Activated T-helper 2 cell treated with anti-CD3 and anti-CD28 coated beads, Interferon-gamma antibody, Interleukin-2, Interleukin-4, amounts not matched to agents 10 μg/mL and 5 μg/mL and 100 μg/mL, durations not matched to agents 14 hours and 24 hours and 36 hours (primary cell): ENCODE measurements at regions of chr13 and their contacts with region 1.

Region 1: DNA sequence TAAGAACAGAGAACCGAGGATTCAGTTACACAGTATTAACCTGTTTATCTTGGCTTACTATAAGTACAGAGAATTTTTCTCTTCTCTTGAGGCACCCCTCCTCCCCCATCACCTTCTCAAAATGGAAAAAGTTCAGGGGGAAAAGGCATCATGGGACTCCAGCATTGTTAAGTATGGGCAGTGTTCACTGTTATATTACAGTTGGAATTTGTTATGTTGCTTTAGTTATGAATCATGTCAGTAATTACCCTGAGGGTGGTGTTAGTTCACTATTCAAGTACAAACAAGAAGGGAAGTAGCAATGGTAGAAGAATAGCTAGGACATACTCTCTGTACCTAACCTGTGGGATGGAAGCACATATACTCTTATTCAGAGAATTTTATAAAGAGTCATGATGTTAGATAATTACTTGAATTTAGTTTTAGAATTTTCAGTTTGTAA is 12.0 kb downstream of the LPAR6 start:
- DNase-seq: no peak
- H3K4me3 Mint-ChIP-seq: peak overlapping the region; percentile 20
- H3K27ac Mint-ChIP-seq: peak overlapping the region; percentile 22
- H3K4me1 Mint-ChIP-seq: peaks cover 49% of the 10 kb centered on the region
- H3K27me3 Mint-ChIP-seq: no peaks in the 10 kb centered on the region

Region 2: GRCh38 chr13:48233046-48233907 is 167.6 kb before region 1 on chr13 and contains the start of gene ITM2B:
- intact Hi-C with region 1: loop called (anchors 2 kb)
- DNase-seq: peak; percentile 50
- H3K4me3 Mint-ChIP-seq: peak within 1 kb of the TSS; percentile 87
- H3K27ac Mint-ChIP-seq: peak within 1 kb of the TSS; percentile 73
- H3K4me1 Mint-ChIP-seq: peaks cover 38% of the 10 kb centered on the region
- H3K27me3 Mint-ChIP-seq: peaks cover 44% of the 10 kb centered on the region
- total RNA-seq, gene ITM2B: 48.7 and 54.4 TPM in 2 replicates

Region 3: DNA sequence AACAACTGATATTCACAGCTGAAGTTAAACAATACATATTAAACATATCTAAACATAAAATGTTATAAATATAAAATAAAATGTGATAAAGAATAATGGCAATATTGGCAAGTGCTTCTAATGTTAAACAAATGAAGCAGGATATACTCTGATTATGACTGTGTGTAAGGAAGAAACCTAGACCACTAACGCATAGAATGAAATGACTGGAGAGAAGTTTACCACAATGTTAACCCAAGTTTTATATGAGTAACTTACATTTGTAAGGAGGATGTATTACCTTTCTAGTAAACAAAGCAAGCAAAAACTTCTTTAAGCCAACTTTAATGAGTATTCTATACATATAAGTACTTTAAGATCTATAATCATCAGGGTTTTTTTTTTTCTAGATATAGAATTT is 54.3 kb before region 1 on chr13:
- intact Hi-C with region 1: loop called (anchors 2 kb)
- DNase-seq: no peak
- H3K4me3 Mint-ChIP-seq: no peak overlapping the region
- H3K27ac Mint-ChIP-seq: no peak overlapping the region
- H3K4me1 Mint-ChIP-seq: peaks cover 11% of the 10 kb centered on the region
- H3K27me3 Mint-ChIP-seq: no peaks in the 10 kb centered on the region

Region 4: DNA sequence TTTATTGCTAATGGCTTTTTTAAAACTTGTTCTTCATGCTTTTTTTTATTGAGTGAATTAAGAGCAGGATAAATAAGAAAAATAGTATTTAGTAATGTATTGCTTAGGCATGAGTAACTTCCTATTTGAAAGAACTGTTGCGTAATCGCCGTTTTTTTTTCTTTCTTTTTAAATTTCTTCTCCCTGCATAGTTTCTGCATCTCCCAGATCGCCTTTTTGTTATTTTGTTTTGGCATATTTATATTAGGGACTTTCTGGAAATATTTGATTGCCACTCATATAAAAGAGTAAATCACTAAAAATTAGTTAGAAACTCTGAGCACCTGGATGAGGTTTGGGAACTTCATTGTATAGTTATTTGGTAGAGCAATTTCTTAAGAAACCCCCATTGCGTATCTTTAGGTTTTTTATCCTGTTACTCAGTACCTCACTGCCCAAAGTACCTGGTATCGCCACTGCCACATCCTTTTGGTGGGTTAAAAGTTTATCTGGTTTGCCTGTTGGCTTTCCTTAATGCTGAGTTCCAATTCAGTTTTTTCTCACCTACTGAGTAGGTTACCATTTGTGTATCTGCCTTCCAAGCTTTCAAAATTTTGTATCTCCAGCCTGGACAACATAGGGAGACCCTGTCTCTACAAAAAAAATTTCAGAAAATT is 48.2 kb after region 1 on chr13:
- intact Hi-C with region 1: loop called (anchors 2 kb)
- DNase-seq: no peak
- H3K4me3 Mint-ChIP-seq: peak overlapping the region; percentile 20
- H3K27ac Mint-ChIP-seq: no peak overlapping the region
- H3K4me1 Mint-ChIP-seq: peaks cover 34% of the 10 kb centered on the region
- H3K27me3 Mint-ChIP-seq: no peaks in the 10 kb centered on the region

Region 5: GRCh38 chr13:48580185-48580803 is 179.4 kb after region 1 on chr13:
- intact Hi-C with region 1: loop called (anchors 2 kb)
- DNase-seq: peak; percentile 39
- H3K4me3 Mint-ChIP-seq: no peak overlapping the region
- H3K27ac Mint-ChIP-seq: no peak overlapping the region
- H3K4me1 Mint-ChIP-seq: peaks cover 33% of the 10 kb centered on the region
- H3K27me3 Mint-ChIP-seq: peaks cover 61% of the 10 kb centered on the region

Region 6: GRCh38 chr13:48595431-48596429 is 194.9 kb after region 1 on chr13:
- intact Hi-C with region 1: no loop called
- DNase-seq: peak; percentile 32
- H3K4me3 Mint-ChIP-seq: no peak overlapping the region
- H3K27ac Mint-ChIP-seq: no peak overlapping the region
- H3K4me1 Mint-ChIP-seq: peaks cover 3% of the 10 kb centered on the region
- H3K27me3 Mint-ChIP-seq: peaks cover 5% of the 10 kb centered on the region

Region 7: DNA sequence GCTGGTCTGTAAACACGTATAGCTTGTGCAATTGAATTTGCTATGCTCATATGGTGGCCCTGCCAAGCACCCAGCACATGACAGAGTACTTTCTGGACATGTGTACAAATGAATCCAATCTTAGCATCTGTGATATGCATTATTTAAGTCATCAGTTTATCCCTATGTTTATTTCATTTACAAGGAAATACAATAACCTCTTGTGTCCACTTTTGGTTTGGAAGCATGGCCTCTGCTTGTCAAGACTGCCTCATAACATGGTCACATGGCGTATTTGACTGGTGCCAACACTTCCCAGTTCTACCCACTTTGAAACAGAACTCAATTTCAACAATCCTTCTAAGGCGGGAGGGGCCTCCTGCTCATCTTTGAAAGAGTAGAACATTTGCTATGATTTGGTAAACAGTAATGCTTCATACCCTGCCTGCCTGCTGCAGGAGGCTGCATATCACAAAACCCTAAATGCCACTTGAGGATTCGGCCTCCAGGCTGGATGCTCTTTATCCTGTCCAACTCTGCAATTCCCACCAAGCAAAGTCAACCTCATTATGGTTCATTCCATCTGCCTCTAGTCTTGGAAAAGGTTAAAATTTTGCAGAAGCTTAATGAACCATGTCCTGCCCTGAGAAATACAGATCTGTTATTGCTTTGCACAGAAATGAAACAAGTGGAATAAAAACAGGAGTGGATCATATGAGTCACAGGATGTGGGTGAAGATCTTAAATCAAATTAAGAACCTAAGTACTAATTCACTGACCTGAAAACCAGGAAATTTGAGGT is 404.1 kb after region 1 on chr13:
- intact Hi-C with region 1: loop called (anchors 5 kb)
- DNase-seq: no peak
- H3K4me3 Mint-ChIP-seq: peak overlapping the region; percentile 15
- H3K27ac Mint-ChIP-seq: peak overlapping the region; percentile 63
- H3K4me1 Mint-ChIP-seq: peaks cover 25% of the 10 kb centered on the region
- H3K27me3 Mint-ChIP-seq: peaks cover 14% of the 10 kb centered on the region

Region 8: GRCh38 chr13:49033101-49033500 is 632.2 kb after region 1 on chr13:
- intact Hi-C with region 1: no loop called
- DNase-seq: no peak
- H3K4me3 Mint-ChIP-seq: no peak overlapping the region
- H3K27ac Mint-ChIP-seq: no peak overlapping the region
- H3K4me1 Mint-ChIP-seq: no peaks in the 10 kb centered on the region
- H3K27me3 Mint-ChIP-seq: no peaks in the 10 kb centered on the region